ENCODE measurements at regions of chr6 and their contacts with region 1.

Region 1: DNA sequence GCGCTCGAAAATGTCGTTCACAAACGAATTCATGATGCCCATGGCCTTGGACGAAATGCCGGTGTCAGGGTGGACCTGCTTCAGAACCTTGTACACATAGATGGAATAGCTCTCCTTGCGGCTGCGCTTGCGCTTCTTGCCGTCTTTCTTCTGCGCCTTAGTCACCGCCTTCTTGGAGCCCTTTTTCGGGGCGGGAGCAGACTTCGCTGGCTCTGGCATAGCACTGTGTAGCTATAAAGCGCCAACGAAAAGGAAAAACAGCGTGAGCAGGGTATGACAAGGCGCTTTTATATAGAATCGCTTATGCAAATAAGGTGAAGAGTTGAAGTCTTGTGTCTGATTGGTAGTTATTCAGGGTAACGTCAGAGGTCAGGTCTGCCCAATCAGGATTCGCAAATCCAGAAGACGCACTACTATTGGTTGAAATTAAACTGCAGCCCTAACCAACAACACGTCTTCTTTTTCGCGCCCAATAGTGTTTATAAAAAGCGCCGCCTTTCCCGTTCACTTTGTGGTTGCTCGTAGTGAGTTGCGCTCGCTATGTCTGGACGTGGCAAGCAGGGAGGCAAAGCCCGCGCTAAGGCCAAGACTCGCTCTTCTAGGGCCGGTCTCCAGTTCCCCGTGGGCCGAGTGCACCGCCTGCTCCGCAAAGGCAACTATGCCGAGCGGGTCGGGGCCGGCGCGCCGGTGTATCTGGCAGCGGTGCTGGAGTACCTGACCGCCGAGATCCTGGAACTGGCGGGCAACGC is 114.8 kb upstream of the PRSS16 start:
- DNase-seq: peak; percentile 95
- ATAC-seq: peak; percentile 76
- H3K4me3 Mint-ChIP-seq: no peak overlapping the region
- H3K27ac Mint-ChIP-seq: no peak overlapping the region
- H3K4me1 Mint-ChIP-seq: peaks cover 68% of the 10 kb centered on the region
- H3K27me3 Mint-ChIP-seq: no peaks in the 10 kb centered on the region

Region 2: GRCh38 chr6:27059621-27060425 is 72.9 kb before region 1 on chr6:
- CTCF ChIA-PET with region 1: no interaction called
- POLR2A ChIA-PET with region 1: no interaction called
- DNase-seq: no peak
- ATAC-seq: no peak
- H3K4me3 Mint-ChIP-seq: no peak overlapping the region
- H3K27ac Mint-ChIP-seq: no peak overlapping the region
- H3K4me1 Mint-ChIP-seq: no peaks in the 10 kb centered on the region
- H3K27me3 Mint-ChIP-seq: peaks cover 22% of the 10 kb centered on the region

Region 3: DNA sequence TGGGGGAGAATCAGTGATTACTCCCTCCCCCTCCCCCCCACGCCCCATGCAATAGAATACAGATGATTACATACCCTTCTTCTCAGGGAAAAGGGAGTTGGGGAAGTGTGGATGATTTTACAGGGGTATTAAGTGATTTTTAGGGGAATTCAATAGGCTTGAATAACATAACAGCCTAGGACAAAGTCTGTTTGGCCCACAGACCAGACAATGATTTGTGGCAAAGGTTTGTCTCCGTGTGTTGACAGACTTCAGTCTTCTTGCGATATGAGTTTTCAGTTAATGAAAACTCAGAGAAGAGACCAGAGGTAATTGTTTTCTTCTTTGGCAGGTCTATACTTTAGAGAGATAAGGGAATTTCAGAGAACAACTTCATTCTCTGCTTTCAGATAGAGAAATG is 684.2 kb after region 1 on chr6:
- CTCF ChIA-PET with region 1: interaction called, 3 read pairs
- POLR2A ChIA-PET with region 1: interaction called, 480 read pairs
- DNase-seq: no peak
- ATAC-seq: no peak
- H3K4me3 Mint-ChIP-seq: no peak overlapping the region
- H3K27ac Mint-ChIP-seq: peak overlapping the region; percentile 62
- H3K4me1 Mint-ChIP-seq: peaks cover 50% of the 10 kb centered on the region
- H3K27me3 Mint-ChIP-seq: no peaks in the 10 kb centered on the region

Region 4: GRCh38 chr6:27825025-27825793 is 692.5 kb after region 1 on chr6:
- CTCF ChIA-PET with region 1: no interaction called
- POLR2A ChIA-PET with region 1: interaction called, 55 read pairs
- DNase-seq: no peak
- ATAC-seq: peak; percentile 3
- H3K4me3 Mint-ChIP-seq: peak overlapping the region; percentile 93
- H3K27ac Mint-ChIP-seq: peak overlapping the region; percentile 99
- H3K4me1 Mint-ChIP-seq: peaks cover 45% of the 10 kb centered on the region
- H3K27me3 Mint-ChIP-seq: no peaks in the 10 kb centered on the region